ENCODE measurements at regions of chr5 and their contacts with region 1.

Region 1: GRCh38 chr5:40386289-40386688 is 293.4 kb upstream of the PTGER4 start:
- DNase-seq: no peak
- ATAC-seq: peak; percentile 62
- H3K4me3 ChIP-seq: no peak overlapping the region
- H3K4me3 Mint-ChIP-seq: peak overlapping the region in 3 of 10 donors; percentile 38 to 55 (median 48)
- H3K27ac ChIP-seq: peak overlapping the region; percentile 26
- H3K27ac Mint-ChIP-seq: peak overlapping the region in 4 of 9 donors; percentile 26 to 79 (median 54)
- H3K4me1 ChIP-seq: peaks cover 23 to 66% of the 10 kb centered on the region in 2 donors
- H3K4me1 Mint-ChIP-seq: peaks cover 37 to 86% (median 66%) of the 10 kb centered on the region in 7 donors
- H3K27me3 ChIP-seq: no peaks in the 10 kb centered on the region
- H3K27me3 Mint-ChIP-seq: no peaks in the 10 kb centered on the region

Region 2: GRCh38 chr5:40277161-40277906 is 109.0 kb before region 1 on chr5:
- CTCF ChIA-PET with region 1: no interaction called
- POLR2A ChIA-PET with region 1: no interaction called
- intact Hi-C with region 1: loop called in 1 of 2 experiments (anchors 1 kb)
- DNase-seq: peak in 2 of 9 donors; percentile 6 to 34
- ATAC-seq: peak; percentile 72
- H3K4me3 ChIP-seq: no peak overlapping the region
- H3K4me3 Mint-ChIP-seq: peak overlapping the region in 9 of 10 donors; percentile 7 to 72 (median 42)
- H3K27ac ChIP-seq: peak overlapping the region; percentile 45
- H3K27ac Mint-ChIP-seq: peak overlapping the region; percentile 66 to 88 (median 76)
- H3K4me1 ChIP-seq: peaks cover 9 to 16% of the 10 kb centered on the region in 2 donors
- H3K4me1 Mint-ChIP-seq: peaks cover 18 to 39% (median 33%) of the 10 kb centered on the region in 7 donors
- H3K27me3 ChIP-seq: no peaks in the 10 kb centered on the region
- H3K27me3 Mint-ChIP-seq: no peaks in the 10 kb centered on the region

Region 3: GRCh38 chr5:40404613-40405012 is 18.3 kb after region 1 on chr5:
- CTCF ChIA-PET with region 1: no interaction called
- POLR2A ChIA-PET with region 1: interaction called, 33 read pairs
- intact Hi-C with region 1: loop called (anchors 1 kb)
- DNase-seq: peak in 7 of 9 donors; percentile 36 to 66 (median 60)
- ATAC-seq: peak; percentile 73
- H3K4me3 ChIP-seq: no peak overlapping the region
- H3K4me3 Mint-ChIP-seq: peak overlapping the region in 9 of 10 donors; percentile 34 to 83 (median 62)
- H3K27ac ChIP-seq: peak overlapping the region; percentile 99
- H3K27ac Mint-ChIP-seq: peak overlapping the region; percentile 95 to 100 (median 99)
- H3K4me1 ChIP-seq: peaks cover 48 to 50% of the 10 kb centered on the region in 2 donors
- H3K4me1 Mint-ChIP-seq: peaks cover 43 to 83% (median 80%) of the 10 kb centered on the region in 7 donors
- H3K27me3 ChIP-seq: no peaks in the 10 kb centered on the region
- H3K27me3 Mint-ChIP-seq: no peaks in the 10 kb centered on the region

Region 4: GRCh38 chr5:40486437-40487275 is 100.4 kb after region 1 on chr5:
- CTCF ChIA-PET with region 1: no interaction called
- POLR2A ChIA-PET with region 1: no interaction called
- intact Hi-C with region 1: loop called in 1 of 2 experiments (anchors 1 kb)
- DNase-seq: peak in 8 of 9 donors; percentile 31 to 76 (median 56)
- ATAC-seq: peak; percentile 81
- H3K4me3 ChIP-seq: no peak overlapping the region
- H3K4me3 Mint-ChIP-seq: peak overlapping the region in 4 of 10 donors; percentile 2 to 52 (median 48)
- H3K27ac ChIP-seq: no peak overlapping the region
- H3K27ac Mint-ChIP-seq: peak overlapping the region in 8 of 9 donors; percentile 5 to 87 (median 59)
- H3K4me1 ChIP-seq: peaks cover 6 to 12% of the 10 kb centered on the region in 2 donors
- H3K4me1 Mint-ChIP-seq: peaks cover 6 to 69% (median 30%) of the 10 kb centered on the region in 7 donors
- H3K27me3 ChIP-seq: no peaks in the 10 kb centered on the region
- H3K27me3 Mint-ChIP-seq: no peaks in the 10 kb centered on the region

Region 5: DNA sequence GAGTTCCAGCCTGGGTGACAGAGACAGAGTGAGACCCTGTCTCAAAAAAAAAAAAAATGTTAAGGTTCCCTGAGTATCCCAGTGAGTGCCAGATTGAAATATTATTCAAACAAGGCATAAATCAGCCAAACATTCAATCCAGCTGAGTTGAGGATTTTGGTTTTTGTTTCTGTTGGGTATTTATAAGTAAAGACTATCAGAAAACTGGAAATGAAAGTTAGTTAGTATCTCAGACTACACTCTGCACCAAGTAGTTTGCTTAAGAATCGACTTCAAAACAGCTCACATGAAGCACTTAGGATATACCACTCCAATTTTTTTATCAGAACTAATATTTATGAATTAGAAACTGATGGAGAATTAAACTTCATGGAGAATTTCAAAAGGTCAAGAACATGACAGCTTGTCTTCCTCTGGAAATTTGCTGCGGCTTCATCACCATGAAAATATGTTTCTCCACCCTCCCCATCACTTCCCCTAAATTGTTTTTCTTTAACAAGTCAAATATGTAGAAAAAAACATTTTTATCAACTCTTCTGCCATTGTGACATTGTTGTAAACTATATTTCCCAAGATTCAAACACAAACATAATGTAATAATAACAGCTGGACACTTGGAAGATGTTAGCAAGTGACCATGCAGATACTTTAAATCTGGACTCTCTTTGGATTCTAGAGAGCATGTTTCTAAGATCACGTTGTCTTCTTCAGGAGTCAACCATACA is 183.4 kb after region 1 on chr5:
- CTCF ChIA-PET with region 1: no interaction called
- POLR2A ChIA-PET with region 1: no interaction called
- intact Hi-C with region 1: no loop called
- DNase-seq: no peak
- ATAC-seq: no peak
- H3K4me3 ChIP-seq: no peak overlapping the region
- H3K4me3 Mint-ChIP-seq: no peak overlapping the region
- H3K27ac ChIP-seq: no peak overlapping the region
- H3K27ac Mint-ChIP-seq: no peak overlapping the region
- H3K4me1 ChIP-seq: no peaks in the 10 kb centered on the region
- H3K4me1 Mint-ChIP-seq: peaks cover 0 to 18% (median 12%) of the 10 kb centered on the region in 7 donors
- H3K27me3 ChIP-seq: no peaks in the 10 kb centered on the region
- H3K27me3 Mint-ChIP-seq: peaks cover 0 to 4% (median 0%) of the 10 kb centered on the region in 5 donors

Region 6: GRCh38 chr5:40834849-40835787 is 448.8 kb after region 1 on chr5 and contains the start of gene RPL37:
- CTCF ChIA-PET with region 1: no interaction called
- POLR2A ChIA-PET with region 1: no interaction called
- intact Hi-C with region 1: loop called in 1 of 2 experiments (anchors 10 kb)
- DNase-seq: peak; percentile 73 to 91 (median 88)
- ATAC-seq: peak; percentile 96
- H3K4me3 ChIP-seq: peak within 1 kb of the TSS; percentile 88
- H3K4me3 Mint-ChIP-seq: peak within 1 kb of the TSS; percentile 93 to 99 (median 98)
- H3K27ac ChIP-seq: peak within 1 kb of the TSS; percentile 92
- H3K27ac Mint-ChIP-seq: peak within 1 kb of the TSS; percentile 97 to 100 (median 99)
- H3K4me1 ChIP-seq: peaks cover 11 to 23% of the 10 kb centered on the region in 2 donors
- H3K4me1 Mint-ChIP-seq: peaks cover 21 to 58% (median 45%) of the 10 kb centered on the region in 7 donors
- H3K27me3 ChIP-seq: no peaks in the 10 kb centered on the region
- H3K27me3 Mint-ChIP-seq: no peaks in the 10 kb centered on the region
- total RNA-seq, gene RPL37: 1,642 to 2,808 (median 2,710) TPM